Ascending aorta (tissue), 2 donors: ENCODE measurements at regions of chr7 and their contacts with region 1.

Region 1: DNA sequence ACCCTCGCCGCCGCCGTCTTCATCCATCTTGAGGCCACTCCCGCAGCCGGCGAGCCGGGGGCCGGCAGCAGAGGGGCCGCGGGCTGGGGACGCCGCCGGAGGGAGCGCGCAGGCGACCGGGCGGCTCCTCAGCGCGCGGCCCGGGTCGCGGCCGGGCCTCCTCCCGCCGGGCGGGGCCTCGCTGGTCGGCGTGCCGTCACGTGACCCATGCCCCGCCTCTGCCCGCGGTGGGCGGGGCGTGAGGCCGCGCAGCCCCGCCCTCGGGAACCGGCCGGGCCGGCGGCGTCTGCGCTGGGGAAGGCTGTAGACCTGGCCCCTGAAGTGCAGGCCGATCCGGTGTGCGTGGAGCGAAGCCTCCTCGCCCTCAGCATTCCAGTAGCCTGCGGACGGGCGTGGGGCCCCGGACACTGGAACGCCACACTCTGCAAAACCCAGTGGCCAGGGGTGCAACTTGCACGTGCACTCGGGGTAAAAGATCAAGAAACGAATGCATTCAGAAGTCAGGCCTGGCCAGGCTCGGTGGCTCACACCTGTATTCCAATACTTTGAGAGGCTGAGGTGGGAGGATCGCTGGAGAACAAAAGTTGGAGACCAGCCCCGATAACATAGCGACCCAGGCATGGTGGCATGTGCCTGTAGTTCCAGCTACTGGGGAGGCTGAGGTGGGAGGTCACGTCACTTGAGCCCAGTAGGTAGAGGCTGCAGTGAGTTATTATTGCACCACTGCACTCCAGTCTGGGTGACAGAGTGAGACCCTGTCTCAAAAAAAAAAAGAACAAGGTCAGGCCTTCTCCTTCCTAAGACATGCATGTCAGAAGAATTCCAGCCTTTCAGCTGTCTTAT is at the start of gene CYTH3:
- DNase-seq: peak in 1 of 2 donors; percentile 89
- H3K4me3 ChIP-seq: peak within 1 kb of the TSS; percentile 94 to 97
- H3K27ac ChIP-seq: peak within 1 kb of the TSS; percentile 67 to 78
- H3K4me1 ChIP-seq: peaks cover 6 to 23% of the 10 kb centered on the region in 2 donors
- H3K27me3 ChIP-seq: no peaks in the 10 kb centered on the region
- CTCF ChIP-seq: peak in 1 of 3 experiments; percentile 17
- total RNA-seq, gene CYTH3: 51.8 TPM

Region 2: GRCh38 chr7:6160191-6160623 is 112.5 kb before region 1 on chr7:
- intact Hi-C with region 1: loop called (anchors 1 kb)
- DNase-seq: peak in 1 of 2 donors; percentile 84
- H3K4me3 ChIP-seq: no peak overlapping the region
- H3K27ac ChIP-seq: peak overlapping the region; percentile 92 to 96
- H3K4me1 ChIP-seq: peaks cover 5 to 24% of the 10 kb centered on the region in 2 donors
- H3K27me3 ChIP-seq: no peaks in the 10 kb centered on the region
- CTCF ChIP-seq: peak; percentile 63 to 82 (median 66)

Region 3: GRCh38 chr7:6175645-6176044 is 97.1 kb before region 1 on chr7:
- intact Hi-C with region 1: loop called (anchors 1 kb)
- DNase-seq: peak; percentile 55 to 90
- H3K4me3 ChIP-seq: no peak overlapping the region
- H3K27ac ChIP-seq: peak overlapping the region; percentile 81 to 87
- H3K4me1 ChIP-seq: peaks cover 14 to 59% of the 10 kb centered on the region in 2 donors
- H3K27me3 ChIP-seq: no peaks in the 10 kb centered on the region
- CTCF ChIP-seq: no peak

Region 4: GRCh38 chr7:6218329-6218728 is 54.4 kb before region 1 on chr7:
- intact Hi-C with region 1: loop called (anchors 5 kb)
- DNase-seq: no peak
- H3K4me3 ChIP-seq: no peak overlapping the region
- H3K27ac ChIP-seq: peak overlapping the region; percentile 30 to 65
- H3K4me1 ChIP-seq: peaks cover 4 to 28% of the 10 kb centered on the region in 2 donors
- H3K27me3 ChIP-seq: no peaks in the 10 kb centered on the region
- CTCF ChIP-seq: peak in 2 of 3 experiments; percentile 12 to 34

Region 5: DNA sequence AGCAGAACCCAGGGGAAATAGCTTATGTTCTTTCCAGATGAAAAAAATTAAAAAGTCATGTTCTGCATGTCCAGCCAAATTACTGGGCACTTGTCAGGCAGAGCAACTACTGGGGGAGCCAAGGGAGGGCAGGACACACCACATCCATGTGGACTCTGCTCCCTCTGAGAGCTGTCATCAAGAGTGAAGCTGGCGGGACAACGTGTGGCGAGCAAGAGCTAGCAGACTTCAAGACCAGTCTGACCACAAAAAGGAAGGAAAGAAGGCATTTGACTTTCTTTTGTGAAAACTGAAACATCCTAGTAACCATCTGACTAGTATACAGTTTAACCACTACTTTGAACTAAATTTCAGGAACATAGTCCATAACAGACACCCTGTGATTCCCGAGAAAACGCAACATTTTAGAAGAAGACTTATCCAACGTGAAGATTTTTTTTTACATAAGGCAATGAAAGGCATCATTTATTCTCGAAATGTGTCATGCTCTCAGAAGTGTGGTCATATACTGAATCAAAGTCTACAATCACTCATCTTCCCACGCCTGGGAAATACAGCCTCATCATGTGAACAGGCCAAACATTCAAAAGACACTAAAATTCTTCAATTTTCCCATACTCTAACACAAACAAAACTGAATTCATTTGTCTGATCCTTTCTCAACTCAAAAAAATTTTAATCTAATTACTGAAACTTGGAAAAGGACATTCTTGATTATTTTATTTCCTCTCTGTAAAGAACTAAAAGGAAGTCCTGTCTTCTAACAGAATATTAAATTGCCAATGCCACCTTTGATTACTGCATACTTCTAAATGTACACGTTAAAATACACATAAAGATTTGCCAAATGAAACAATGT is 15.8 kb before region 1 on chr7:
- intact Hi-C with region 1: loop called (anchors 1 kb)
- DNase-seq: peak; percentile 33 to 81
- H3K4me3 ChIP-seq: peak overlapping the region in 1 of 2 donors; percentile 33
- H3K27ac ChIP-seq: peak overlapping the region; percentile 75 to 76
- H3K4me1 ChIP-seq: peaks cover 45 to 71% of the 10 kb centered on the region in 2 donors
- H3K27me3 ChIP-seq: no peaks in the 10 kb centered on the region
- CTCF ChIP-seq: no peak

Region 6: GRCh38 chr7:6323967-6324701 is 51.4 kb after region 1 on chr7:
- intact Hi-C with region 1: loop called (anchors 2 kb)
- DNase-seq: no peak
- H3K4me3 ChIP-seq: no peak overlapping the region
- H3K27ac ChIP-seq: no peak overlapping the region
- H3K4me1 ChIP-seq: no peaks in the 10 kb centered on the region
- H3K27me3 ChIP-seq: no peaks in the 10 kb centered on the region
- CTCF ChIP-seq: no peak

Region 7: GRCh38 chr7:6419310-6419773 is 146.6 kb after region 1 on chr7:
- intact Hi-C with region 1: no loop called
- DNase-seq: peak in 1 of 2 donors; percentile 69
- H3K4me3 ChIP-seq: no peak overlapping the region
- H3K27ac ChIP-seq: no peak overlapping the region
- H3K4me1 ChIP-seq: no peaks in the 10 kb centered on the region
- H3K27me3 ChIP-seq: no peaks in the 10 kb centered on the region
- CTCF ChIP-seq: no peak